ENCODE measurements at regions of chr22 and their contacts with region 1.

Region 1: DNA sequence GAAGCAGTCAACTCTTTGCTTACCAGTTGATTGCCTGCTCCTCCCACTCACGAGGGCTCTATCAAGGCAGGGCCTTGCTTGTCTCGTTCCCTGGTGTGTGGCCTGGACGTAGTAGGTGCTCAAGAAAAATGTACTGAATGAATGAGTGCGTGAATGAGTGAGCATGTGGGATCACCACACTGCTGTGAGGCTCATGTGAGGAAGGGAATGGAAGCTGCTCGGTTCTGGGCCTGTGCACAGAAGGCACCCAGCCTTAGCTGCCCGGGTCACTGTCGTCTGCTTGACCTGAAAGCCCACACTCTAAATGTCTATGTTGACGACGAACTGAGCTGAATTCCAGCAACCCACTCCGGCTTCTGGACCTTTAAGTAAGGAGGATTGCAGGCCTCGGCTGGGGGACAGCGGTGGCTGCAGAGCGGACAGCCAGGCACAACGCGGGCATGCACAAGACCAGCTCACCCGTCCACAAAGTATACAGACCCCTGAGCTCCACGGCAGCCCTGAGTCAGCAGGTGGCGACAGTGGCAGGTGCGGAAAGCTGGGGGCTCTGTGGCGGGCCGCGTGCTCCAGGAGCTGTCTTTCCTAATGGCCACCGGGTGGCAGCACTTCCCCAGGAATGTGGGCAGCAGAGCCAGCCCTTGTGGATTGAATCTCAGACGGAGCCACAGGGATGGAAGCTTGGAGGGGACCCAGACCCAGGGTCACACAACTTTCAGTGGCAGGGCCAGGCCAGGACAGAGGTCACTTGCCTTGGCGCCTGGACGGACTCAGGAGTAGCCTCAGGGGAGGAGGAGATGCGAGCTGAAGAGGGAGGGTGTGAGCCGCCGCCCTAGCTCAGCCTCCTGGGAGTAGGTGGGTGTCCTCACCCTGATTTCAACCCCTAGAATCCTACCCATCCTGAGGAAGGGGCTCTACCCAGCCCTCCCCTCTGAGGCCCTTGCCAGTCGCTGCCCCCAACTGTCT is 5.0 kb upstream of the PICK1 start:
- DNase-seq: peak; percentile 81 to 89
- H3K4me3 ChIP-seq: no peak overlapping the region
- H3K27ac ChIP-seq: no peak overlapping the region
- H3K4me1 ChIP-seq: peaks cover 0 to 15% (median 4%) of the 10 kb centered on the region in 4 experiments; a peak in 5 of 7 replicates
- H3K27me3 ChIP-seq: no peaks in the 10 kb centered on the region; a peak in 1 of 7 replicates
- CTCF ChIP-seq: peak; percentile 87 to 97 (median 94)
- EP300 ChIP-seq: peak in 1 of 2 experiments; percentile 21; a peak in 1 of 3 replicates
- POLR2A ChIP-seq: no peak
- RAD21 ChIP-seq: peak; percentile 92 to 95

Region 2: DNA sequence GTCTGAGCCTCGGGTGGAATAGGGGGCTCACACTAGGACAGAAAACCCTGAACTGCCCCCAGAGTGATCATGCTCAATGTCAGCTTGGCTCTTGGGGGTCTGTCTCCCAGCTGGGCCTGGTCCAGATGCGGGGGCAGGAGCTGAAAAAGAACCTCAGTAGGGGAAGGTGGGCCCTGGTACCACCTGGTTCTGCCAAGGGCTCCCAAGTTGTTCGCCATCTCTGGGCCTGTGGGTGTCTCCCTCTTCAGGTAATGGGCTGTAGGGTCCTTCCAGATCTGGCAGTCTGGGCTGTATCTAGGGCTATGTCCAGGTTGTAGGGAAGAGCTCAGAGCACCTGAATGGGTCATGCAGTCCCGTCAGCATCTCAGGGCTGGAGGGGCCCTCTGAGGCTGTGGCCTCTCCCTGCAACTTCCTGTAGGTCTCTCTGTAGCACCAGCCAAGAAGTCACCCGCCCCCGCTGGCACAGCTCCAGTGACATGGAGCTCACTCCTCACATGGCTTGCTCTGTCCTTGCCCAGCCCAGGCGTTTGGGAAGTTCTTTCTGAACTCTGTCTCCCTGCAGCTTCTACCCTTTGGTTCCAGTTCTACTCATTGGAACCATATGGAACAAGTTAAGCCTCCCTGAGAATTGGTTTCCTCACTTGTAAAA is 34.8 kb before region 1 on chr22:
- CTCF ChIA-PET with region 1: interaction called, 15 read pairs
- POLR2A ChIA-PET with region 1: no interaction called
- DNase-seq: no peak
- H3K4me3 ChIP-seq: no peak overlapping the region
- H3K27ac ChIP-seq: no peak overlapping the region
- H3K4me1 ChIP-seq: peaks cover 0 to 15% (median 2%) of the 10 kb centered on the region in 4 experiments; a peak in 3 of 7 replicates
- H3K27me3 ChIP-seq: no peaks in the 10 kb centered on the region; a peak in 1 of 7 replicates
- CTCF ChIP-seq: peak; percentile 8 to 32 (median 19); a peak in 2 of 4 replicates
- EP300 ChIP-seq: no peak
- POLR2A ChIP-seq: no peak
- RAD21 ChIP-seq: peak in 1 of 2 experiments; percentile 33; a peak in 1 of 4 replicates

Region 3: DNA sequence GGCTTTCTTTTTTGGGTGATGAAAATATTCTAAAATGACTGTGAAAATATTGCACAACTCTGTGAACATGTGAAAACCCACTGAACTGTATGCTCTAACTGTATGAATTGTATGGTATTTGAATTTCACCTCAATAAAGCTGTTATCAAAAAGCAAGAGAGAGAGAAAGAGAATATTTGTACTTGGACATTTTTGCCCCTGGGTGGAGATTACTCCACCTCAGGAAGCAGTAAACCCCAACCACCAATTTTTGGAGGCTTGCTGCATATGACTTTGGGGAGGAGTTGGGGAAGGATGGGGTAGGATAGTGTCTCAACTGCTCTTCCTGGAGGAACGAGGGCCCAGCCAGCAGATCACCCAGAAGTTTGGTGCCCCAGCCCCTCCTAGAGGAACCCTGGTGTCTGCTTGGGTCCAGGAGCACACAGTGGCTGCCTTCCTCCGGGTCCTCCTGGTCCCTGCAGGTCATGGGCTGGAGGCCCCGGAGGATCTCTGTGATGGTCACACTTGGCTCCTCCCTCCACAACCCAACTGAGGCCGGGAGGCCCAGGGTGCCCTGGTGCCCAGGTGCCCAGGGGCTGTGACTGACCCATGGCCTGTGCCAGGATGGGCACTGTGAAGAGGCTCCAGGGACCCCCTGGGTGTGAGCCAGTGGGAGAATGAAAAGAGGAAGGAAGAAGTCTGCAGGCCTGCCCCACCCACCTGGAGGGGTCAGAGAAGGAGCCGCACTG is 10.3 kb before region 1 on chr22:
- CTCF ChIA-PET with region 1: interaction called, 17 read pairs
- POLR2A ChIA-PET with region 1: interaction called, 4 read pairs
- DNase-seq: no peak
- H3K4me3 ChIP-seq: no peak overlapping the region
- H3K27ac ChIP-seq: no peak overlapping the region
- H3K4me1 ChIP-seq: no peaks in the 10 kb centered on the region; a peak in 1 of 7 replicates
- H3K27me3 ChIP-seq: no peaks in the 10 kb centered on the region
- CTCF ChIP-seq: no peak
- EP300 ChIP-seq: no peak
- POLR2A ChIP-seq: no peak
- RAD21 ChIP-seq: no peak

Region 4: GRCh38 chr22:38080850-38081635 is 28.9 kb after region 1 on chr22:
- CTCF ChIA-PET with region 1: interaction called, 151 read pairs
- POLR2A ChIA-PET with region 1: interaction called, 3 read pairs
- DNase-seq: peak in 1 of 2 experiments; percentile 75
- H3K4me3 ChIP-seq: peak overlapping the region; percentile 24 to 48 (median 30); a peak in 7 of 8 replicates
- H3K27ac ChIP-seq: no peak overlapping the region
- H3K4me1 ChIP-seq: peaks cover 0 to 25% (median 18%) of the 10 kb centered on the region in 4 experiments; a peak in 6 of 7 replicates
- H3K27me3 ChIP-seq: peaks cover 7 to 37% (median 33%) of the 10 kb centered on the region in 4 experiments
- CTCF ChIP-seq: no peak
- EP300 ChIP-seq: no peak
- POLR2A ChIP-seq: no peak
- RAD21 ChIP-seq: no peak

Region 5: DNA sequence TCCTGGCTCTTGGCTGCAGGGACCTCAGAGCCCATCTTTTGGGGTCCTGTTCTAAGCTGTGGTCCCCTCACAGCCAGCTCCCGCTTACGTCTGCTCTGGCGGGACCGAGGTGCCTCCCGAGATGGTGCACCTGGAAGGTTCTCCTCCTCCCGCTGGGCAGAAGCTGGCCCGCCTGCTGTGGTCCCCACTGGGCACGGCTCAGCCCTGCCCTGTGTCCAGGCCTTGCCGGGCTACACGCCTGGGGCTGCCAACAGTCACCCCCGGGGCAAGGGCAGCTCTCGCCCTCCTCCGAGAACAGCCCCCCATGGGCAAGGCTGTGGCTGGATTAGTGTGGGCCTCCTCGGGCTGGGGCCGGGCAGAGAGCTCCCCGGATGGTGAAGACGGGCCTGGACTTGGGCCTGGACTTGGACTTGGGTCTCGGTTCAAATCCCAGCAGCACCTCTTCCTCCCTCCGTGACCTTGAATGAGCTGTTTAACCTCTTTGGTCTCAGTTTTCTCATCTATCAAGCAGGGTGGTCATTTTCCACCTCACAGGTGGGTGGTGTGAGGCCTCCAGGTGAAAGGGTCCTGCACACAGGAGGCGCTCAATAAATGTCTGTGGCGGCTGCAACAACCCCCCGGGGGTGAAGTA is 57.3 kb after region 1 on chr22:
- CTCF ChIA-PET with region 1: interaction called, 184 read pairs
- POLR2A ChIA-PET with region 1: interaction called, 4 read pairs
- DNase-seq: no peak
- H3K4me3 ChIP-seq: no peak overlapping the region
- H3K27ac ChIP-seq: no peak overlapping the region
- H3K4me1 ChIP-seq: peaks cover 0 to 9% (median 7%) of the 10 kb centered on the region in 4 experiments; a peak in 3 of 7 replicates
- H3K27me3 ChIP-seq: no peaks in the 10 kb centered on the region
- CTCF ChIP-seq: no peak
- EP300 ChIP-seq: no peak
- POLR2A ChIP-seq: no peak
- RAD21 ChIP-seq: no peak

Region 6: GRCh38 chr22:38135133-38135751 is 83.1 kb after region 1 on chr22:
- CTCF ChIA-PET with region 1: interaction called, 15 read pairs
- POLR2A ChIA-PET with region 1: no interaction called
- DNase-seq: no peak
- H3K4me3 ChIP-seq: no peak overlapping the region
- H3K27ac ChIP-seq: no peak overlapping the region
- H3K4me1 ChIP-seq: no peaks in the 10 kb centered on the region
- H3K27me3 ChIP-seq: no peaks in the 10 kb centered on the region
- CTCF ChIP-seq: no peak
- EP300 ChIP-seq: no peak
- POLR2A ChIP-seq: no peak
- RAD21 ChIP-seq: no peak

Region 7: DNA sequence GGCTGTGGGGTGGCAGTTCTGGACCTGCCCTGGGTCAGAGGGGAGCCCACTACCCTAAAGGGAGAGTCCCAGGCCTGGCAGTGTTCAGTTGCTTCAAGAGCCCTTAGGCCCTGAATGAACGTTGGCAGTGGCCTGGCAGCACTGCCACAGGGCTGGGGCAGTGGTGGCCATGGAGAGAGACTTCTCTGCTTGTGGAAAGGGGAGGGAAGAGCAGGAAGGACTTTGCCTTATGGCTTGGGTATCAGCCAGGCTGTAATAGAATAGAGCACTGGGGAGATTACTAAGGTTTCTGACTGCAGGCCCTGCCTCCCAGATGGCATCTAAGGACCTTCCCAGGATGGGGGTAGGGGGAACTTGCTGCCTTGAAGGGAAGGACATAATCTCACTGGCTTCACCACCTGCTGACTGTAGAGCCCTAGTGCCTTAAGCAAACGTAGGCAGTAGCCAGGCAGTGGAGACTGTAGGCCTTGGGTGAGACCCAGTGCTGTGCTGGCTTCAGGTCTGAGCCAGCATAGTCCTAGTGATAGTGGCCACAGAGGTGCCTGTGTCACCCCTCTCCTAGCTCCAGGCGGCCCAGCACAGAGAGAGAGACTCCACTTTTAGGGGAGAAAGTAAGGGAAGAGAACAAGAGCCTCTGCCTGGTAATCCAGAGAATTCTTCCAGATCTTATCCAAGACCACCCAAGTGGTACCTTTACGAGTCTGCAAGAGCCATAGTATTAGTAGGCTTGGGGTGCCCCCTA is 101.8 kb after region 1 on chr22:
- CTCF ChIA-PET with region 1: interaction called, 14 read pairs
- POLR2A ChIA-PET with region 1: no interaction called
- DNase-seq: peak in 1 of 2 experiments; percentile 62
- H3K4me3 ChIP-seq: no peak overlapping the region
- H3K27ac ChIP-seq: no peak overlapping the region
- H3K4me1 ChIP-seq: peaks cover 0 to 7% (median under 1%) of the 10 kb centered on the region in 4 experiments; a peak in 3 of 7 replicates
- H3K27me3 ChIP-seq: no peaks in the 10 kb centered on the region
- CTCF ChIP-seq: peak in 1 of 3 experiments; percentile 49; a peak in 2 of 4 replicates
- EP300 ChIP-seq: no peak
- POLR2A ChIP-seq: no peak
- RAD21 ChIP-seq: peak; percentile 70 to 72

Region 8: GRCh38 chr22:38240734-38241252 is 188.6 kb after region 1 on chr22:
- CTCF ChIA-PET with region 1: no interaction called
- POLR2A ChIA-PET with region 1: no interaction called
- DNase-seq: peak; percentile 46 to 72
- H3K4me3 ChIP-seq: peak overlapping the region in 1 of 4 experiments; percentile 21; a peak in 1 of 8 replicates
- H3K27ac ChIP-seq: peak overlapping the region; percentile 52; the same call in 1 of the 2 replicates
- H3K4me1 ChIP-seq: peaks cover 0 to 9% (median 0%) of the 10 kb centered on the region in 4 experiments; a peak in 4 of 7 replicates
- H3K27me3 ChIP-seq: no peaks in the 10 kb centered on the region
- CTCF ChIP-seq: no peak
- EP300 ChIP-seq: peak in 1 of 2 experiments; percentile 46; a peak in 1 of 3 replicates
- POLR2A ChIP-seq: 0 out of 3 replicates have a peak, but pooled peaks of 1 of the 2 experiments have one; percentile 39
- RAD21 ChIP-seq: peak in 1 of 2 experiments; percentile 21; a peak in 2 of 4 replicates